Heart right ventricle (tissue), 16 donors: ENCODE measurements at regions of chr5 and their contacts with region 1.

Region 1: GRCh38 chr5:150846654-150847333 is 473 bp downstream of the IRGM start:
- DNase-seq: peak in 1 of 2 donors; percentile 71
- ATAC-seq: peak; percentile 81 to 94 (median 92)
- H3K4me3 ChIP-seq: peak overlapping the region in 1 of 10 donors; percentile 28
- H3K27ac ChIP-seq: no peak overlapping the region
- H3K4me1 ChIP-seq: peaks cover 0 to 5% (median 0%) of the 10 kb centered on the region in 9 donors
- H3K27me3 ChIP-seq: no peaks in the 10 kb centered on the region
- CTCF ChIP-seq: peak; percentile 37 to 81 (median 71)

Region 2: DNA sequence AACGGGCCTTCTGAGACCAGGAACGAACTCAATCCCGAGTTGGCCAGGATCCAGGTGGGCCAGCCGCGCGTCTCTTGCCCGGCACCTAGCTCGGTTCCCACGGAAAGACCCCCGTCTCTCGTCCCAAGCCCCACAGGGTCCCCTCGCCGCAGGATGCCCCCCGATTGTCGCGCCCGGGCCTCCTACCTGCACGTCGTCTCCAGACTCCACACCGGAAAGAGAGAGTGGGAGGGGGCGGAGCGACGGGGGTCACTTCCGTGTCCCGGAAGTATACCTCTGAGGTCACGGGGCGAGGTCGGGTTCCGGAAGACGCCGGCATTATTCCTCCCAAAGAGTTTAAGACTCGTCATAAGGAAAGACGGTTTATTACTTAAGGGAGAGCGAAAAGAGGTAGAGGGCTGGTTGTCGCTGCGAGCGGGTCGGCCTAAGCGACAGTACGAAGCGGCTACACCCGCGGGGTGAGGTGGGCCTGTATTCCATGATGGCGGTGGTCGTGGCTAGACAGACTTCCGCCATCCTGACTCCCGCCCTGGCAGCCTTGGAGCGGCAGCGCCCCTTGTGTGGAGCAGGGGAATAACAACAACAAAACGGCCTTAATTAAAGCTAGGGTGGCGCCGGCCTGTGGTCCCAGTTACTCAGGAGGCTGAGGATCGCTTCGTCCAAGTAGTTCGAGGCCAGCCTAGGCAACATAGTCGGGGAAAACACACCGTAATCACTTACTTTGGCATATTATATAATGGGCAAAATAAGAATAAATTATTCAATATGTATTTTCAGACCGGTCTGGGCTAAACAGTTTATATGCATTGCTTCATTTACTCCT is 397.1 kb before region 1 on chr5 and contains the start of gene RPS14:
- intact Hi-C with region 1: loop called in 4 of 10 experiments (anchors 10 kb)
- DNase-seq: peak; percentile 92 to 94
- ATAC-seq: peak; percentile 96 to 99 (median 98)
- H3K4me3 ChIP-seq: peak within 1 kb of the TSS; percentile 45 to 97 (median 84)
- H3K27ac ChIP-seq: peak within 1 kb of the TSS; percentile 89 to 99 (median 97)
- H3K4me1 ChIP-seq: peaks cover 7 to 47% (median 18%) of the 10 kb centered on the region in 9 donors
- H3K27me3 ChIP-seq: no peaks in the 10 kb centered on the region
- CTCF ChIP-seq: peak; percentile 89 to 97 (median 92)
- total RNA-seq, gene RPS14: 984 to 1,344 (median 1,239) TPM

Region 3: DNA sequence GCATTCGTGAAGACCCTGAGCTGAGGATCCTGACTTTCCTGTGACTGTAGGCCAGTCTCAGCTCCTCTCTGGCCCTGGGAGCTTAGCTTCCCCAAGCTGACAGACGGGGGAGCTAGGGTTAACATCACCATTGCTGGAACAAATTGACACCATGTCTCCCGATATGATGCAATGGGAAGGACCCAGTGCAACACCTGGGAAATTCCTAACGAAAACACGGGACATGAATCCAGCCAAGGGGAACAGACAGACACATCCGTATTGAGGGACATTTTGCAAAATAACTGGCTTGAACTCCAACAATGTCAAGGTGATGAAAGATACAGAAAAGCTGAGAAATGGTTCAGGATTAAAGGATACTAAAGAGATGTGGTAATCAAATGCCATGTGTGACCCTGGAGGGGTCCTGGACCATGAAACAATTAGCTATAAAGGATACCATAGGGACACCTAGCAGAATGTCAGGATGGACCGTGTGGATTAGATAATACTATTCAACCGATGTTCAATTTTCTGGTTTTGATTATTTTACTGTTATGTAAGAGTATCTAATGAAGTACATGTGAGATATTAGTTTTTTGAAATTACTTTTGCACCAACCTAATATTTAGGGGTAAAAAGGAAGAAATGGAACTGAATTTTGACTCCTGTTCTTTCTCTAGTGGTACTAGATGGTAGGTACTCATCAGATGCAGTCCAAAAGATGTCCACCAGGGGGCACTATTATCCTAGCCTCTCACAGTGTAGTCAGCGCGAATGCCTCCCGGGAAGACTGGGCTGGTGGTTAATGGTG is 286.2 kb before region 1 on chr5:
- intact Hi-C with region 1: loop called in 9 of 10 experiments (anchors 2 to 10 kb)
- DNase-seq: peak in 1 of 2 donors; percentile 91
- ATAC-seq: peak; percentile 78 to 91 (median 87)
- H3K4me3 ChIP-seq: no peak overlapping the region
- H3K27ac ChIP-seq: peak overlapping the region in 1 of 10 donors; percentile 0
- H3K4me1 ChIP-seq: peaks cover 0 to 29% (median 8%) of the 10 kb centered on the region in 9 donors
- H3K27me3 ChIP-seq: no peaks in the 10 kb centered on the region
- CTCF ChIP-seq: peak; percentile 88 to 97 (median 95)

Region 4: DNA sequence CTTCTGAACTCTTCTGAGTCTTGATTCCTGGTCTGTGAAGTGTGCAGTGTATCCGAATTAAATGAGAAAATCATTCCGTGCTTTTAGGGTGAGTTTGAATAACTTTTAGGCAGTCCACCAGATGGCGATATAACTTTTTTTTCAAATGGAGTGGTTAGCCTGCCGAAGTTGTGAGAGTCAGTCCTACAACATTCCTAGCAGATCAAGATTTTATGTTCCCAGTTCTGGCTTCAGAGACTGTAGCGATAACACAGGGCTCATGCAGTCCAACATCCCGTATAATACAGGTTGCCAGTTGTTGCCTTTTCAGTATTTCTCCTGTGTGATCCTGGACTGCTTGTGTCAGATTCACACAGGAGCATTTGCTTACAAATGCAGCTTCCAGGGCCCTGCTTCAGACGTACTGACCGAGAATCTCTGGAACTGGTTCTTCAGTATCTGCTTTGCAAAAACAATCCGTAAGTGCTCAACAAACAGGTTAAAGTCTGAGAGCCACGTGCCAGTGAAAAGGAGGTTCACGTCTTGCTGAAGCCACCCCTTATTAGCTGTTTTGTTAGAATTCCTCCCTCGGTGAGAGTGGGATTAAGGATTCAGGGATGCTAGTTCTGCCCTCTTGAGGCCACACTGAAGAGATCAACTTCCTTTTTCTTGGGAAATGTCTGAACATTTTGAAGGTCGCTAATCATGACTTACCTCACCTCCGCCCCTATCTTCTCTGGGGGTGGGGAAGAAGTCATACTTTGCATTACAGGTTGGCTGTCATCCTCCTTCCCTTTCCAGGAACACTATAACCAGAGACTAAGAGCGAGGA is 45.5 kb before region 1 on chr5:
- intact Hi-C with region 1: loop called in 8 of 10 experiments (anchors 1 to 5 kb)
- DNase-seq: peak in 1 of 2 donors; percentile 51
- ATAC-seq: peak; percentile 75 to 93 (median 90)
- H3K4me3 ChIP-seq: peak overlapping the region in 9 of 10 donors; percentile 18 to 51 (median 43)
- H3K27ac ChIP-seq: peak overlapping the region in 9 of 10 donors; percentile 10 to 63 (median 41)
- H3K4me1 ChIP-seq: peaks cover 0 to 13% (median 4%) of the 10 kb centered on the region in 9 donors
- H3K27me3 ChIP-seq: no peaks in the 10 kb centered on the region
- CTCF ChIP-seq: peak; percentile 27 to 67 (median 53)

Region 5: DNA sequence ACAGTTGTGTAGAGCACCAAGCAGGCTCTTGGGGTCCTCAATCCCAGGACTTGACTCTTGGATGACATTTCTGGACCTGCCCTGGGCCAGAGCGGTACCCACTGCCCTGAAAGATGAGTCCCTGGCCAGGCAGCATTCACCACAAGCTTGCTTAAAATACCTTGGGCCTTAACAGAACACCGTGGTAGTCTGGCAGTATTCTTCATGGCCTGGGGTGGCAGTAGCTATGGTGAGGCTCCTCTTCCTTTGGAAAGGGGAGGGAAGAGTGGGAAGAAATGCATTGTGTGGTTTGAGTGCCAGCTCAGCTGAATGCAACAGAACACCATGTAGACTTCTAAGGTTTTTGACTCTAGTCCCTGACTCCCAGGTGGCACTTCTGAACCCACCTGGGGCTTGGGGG is 29.8 kb before region 1 on chr5:
- intact Hi-C with region 1: loop called in 1 of 10 experiments (anchors 2 kb)
- DNase-seq: no peak
- ATAC-seq: no peak
- H3K4me3 ChIP-seq: no peak overlapping the region
- H3K27ac ChIP-seq: no peak overlapping the region
- H3K4me1 ChIP-seq: no peaks in the 10 kb centered on the region
- H3K27me3 ChIP-seq: no peaks in the 10 kb centered on the region
- CTCF ChIP-seq: no peak

Region 6: GRCh38 chr5:151708126-151708525 is 861.3 kb after region 1 on chr5:
- intact Hi-C with region 1: no loop called
- DNase-seq: no peak
- ATAC-seq: no peak
- H3K4me3 ChIP-seq: no peak overlapping the region
- H3K27ac ChIP-seq: peak overlapping the region in 5 of 10 donors; percentile 5 to 69 (median 17)
- H3K4me1 ChIP-seq: peaks cover 0 to 15% (median 7%) of the 10 kb centered on the region in 9 donors
- H3K27me3 ChIP-seq: no peaks in the 10 kb centered on the region
- CTCF ChIP-seq: no peak